Transverse colon (tissue), 4 donors: ENCODE measurements at regions of chr1 and their contacts with region 1.

Region 1: DNA sequence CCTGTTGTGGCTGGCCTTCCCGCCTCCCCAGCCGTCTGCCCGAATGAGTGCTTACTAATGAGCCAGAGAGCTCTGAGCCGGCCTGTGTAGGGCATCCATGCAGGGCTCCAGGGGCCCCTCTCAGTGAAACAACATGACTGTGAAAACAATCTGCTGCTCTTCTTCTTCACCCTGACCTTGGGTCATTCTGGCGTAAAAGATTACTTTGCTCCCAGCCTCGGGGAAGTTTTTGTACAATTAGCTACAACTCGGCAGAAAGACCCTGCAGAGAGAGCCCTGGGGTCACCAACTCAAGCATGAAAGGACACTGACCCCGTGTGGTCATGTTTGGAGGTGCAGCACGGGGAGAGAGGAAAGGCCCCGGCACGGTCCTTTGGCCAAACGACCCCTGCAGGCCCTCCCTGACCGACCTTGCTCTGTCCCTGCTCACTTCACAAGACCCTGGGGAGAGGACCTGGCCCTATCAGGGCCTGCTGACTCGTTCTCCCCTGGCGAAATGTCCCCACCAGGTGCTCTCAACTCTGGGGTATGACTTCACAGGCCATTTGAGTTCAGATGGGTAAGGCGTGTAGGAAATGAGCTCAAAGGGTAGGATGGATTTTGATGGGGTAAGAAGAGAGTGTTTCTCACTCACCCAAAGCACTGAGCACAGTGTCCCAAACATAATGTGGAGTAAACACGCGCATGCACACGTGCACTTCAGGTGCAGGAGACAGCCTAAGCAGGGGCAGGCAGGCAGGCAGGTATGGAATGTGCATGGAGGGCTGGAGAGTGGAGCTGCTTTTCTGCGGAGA is 22.9 kb upstream of the FAM20B start:
- DNase-seq: peak; percentile 79
- H3K4me3 ChIP-seq: no peak overlapping the region
- H3K27ac ChIP-seq: peak overlapping the region; percentile 52 to 66 (median 53)
- H3K4me1 ChIP-seq: peaks cover 0 to 20% (median 14%) of the 10 kb centered on the region in 4 donors
- H3K27me3 ChIP-seq: no peaks in the 10 kb centered on the region
- CTCF ChIP-seq: peak; percentile 97 to 99 (median 98)
- EP300 ChIP-seq: no peak
- POLR2A ChIP-seq: no peak

Region 2: GRCh38 chr1:177392336-177392735 is 1610.4 kb before region 1 on chr1:
- in situ Hi-C with region 1: no loop called
- intact Hi-C with region 1: no loop called
- DNase-seq: no peak
- H3K4me3 ChIP-seq: no peak overlapping the region
- H3K27ac ChIP-seq: no peak overlapping the region
- H3K4me1 ChIP-seq: no peaks in the 10 kb centered on the region
- H3K27me3 ChIP-seq: no peaks in the 10 kb centered on the region
- CTCF ChIP-seq: no peak
- EP300 ChIP-seq: no peak
- POLR2A ChIP-seq: no peak

Region 3: DNA sequence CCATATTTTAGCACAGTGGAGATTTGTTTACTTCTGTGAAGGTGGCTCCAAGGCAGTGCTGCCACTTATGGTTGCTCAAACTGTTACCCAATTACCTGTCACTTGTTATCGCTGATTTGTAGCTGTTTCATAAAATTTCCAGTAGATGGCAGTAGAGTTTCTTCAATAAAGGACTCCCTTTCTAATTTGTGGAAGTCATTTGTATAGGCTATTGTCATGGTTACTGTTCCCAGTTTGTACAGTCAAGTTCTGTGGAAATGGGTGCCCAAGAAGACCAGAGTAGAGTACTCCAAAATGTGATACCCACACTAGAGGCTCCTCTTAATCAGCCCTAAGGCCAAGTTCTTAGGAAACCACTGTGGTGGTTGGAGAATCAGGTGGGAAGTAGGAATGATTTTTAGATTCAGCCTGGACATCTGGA is 692.1 kb before region 1 on chr1:
- in situ Hi-C with region 1: loop called in 1 of 4 experiments (anchors 25 kb)
- intact Hi-C with region 1: no loop called
- DNase-seq: no peak
- H3K4me3 ChIP-seq: no peak overlapping the region
- H3K27ac ChIP-seq: no peak overlapping the region
- H3K4me1 ChIP-seq: peaks cover 0 to 12% (median 8%) of the 10 kb centered on the region in 4 donors
- H3K27me3 ChIP-seq: no peaks in the 10 kb centered on the region
- CTCF ChIP-seq: peak; percentile 66 to 81 (median 74)
- EP300 ChIP-seq: no peak
- POLR2A ChIP-seq: no peak

Region 4: GRCh38 chr1:178532392-178532791 is 470.4 kb before region 1 on chr1:
- in situ Hi-C with region 1: loop called (anchors 5 to 25 kb)
- intact Hi-C with region 1: loop called (anchors 10 kb)
- DNase-seq: peak; percentile 90
- H3K4me3 ChIP-seq: no peak overlapping the region
- H3K27ac ChIP-seq: no peak overlapping the region
- H3K4me1 ChIP-seq: peaks cover 1 to 21% (median 6%) of the 10 kb centered on the region in 4 donors
- H3K27me3 ChIP-seq: no peaks in the 10 kb centered on the region
- CTCF ChIP-seq: peak; percentile 90 to 93 (median 92)
- EP300 ChIP-seq: no peak
- POLR2A ChIP-seq: no peak

Region 5: DNA sequence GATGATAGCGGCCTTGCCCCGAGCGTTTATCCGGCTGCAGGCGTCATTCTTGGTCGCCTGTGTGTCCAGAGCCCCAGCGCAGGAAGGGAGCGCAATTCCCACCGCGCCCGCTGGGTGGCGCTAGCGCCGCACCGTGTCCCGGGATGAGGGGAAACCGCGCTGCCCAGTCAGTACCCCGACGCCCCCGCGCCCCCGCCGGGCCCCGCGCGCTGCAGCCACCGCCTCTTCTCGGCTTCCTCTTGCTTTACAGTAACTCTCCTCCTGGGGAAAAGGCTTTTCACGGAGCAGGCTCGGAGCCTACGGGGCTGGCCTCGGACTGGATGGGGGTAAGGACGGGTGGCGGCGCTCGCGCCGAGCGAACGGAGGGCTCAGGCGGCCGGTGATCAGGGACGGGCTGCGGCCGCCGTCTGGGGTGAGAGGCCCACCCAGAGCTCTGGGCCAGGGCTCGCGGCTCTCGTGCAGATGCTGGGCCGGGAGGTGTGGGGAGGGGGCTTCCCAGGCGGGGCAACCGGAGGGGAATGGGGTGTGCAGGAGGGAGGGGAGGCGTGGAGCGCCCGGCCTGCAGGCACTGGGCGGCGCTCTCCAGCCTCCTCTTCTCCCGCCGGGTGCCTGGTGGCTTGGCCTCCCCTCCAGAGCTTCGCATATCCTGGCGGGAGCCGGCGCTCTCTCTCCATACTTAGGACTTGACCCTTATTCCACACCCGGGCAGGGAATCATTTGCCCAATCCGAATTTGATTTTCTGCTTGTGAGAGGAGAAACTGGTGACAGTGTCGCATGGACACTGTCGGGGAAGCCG is 460.0 kb before region 1 on chr1:
- in situ Hi-C with region 1: loop called in 1 of 4 experiments (anchors 25 kb)
- intact Hi-C with region 1: loop called (anchors 10 kb)
- DNase-seq: peak; percentile 94
- H3K4me3 ChIP-seq: peak overlapping the region; percentile 62 to 98 (median 71)
- H3K27ac ChIP-seq: peak overlapping the region; percentile 89 to 96 (median 92)
- H3K4me1 ChIP-seq: peaks cover 15 to 34% (median 21%) of the 10 kb centered on the region in 4 donors
- H3K27me3 ChIP-seq: no peaks in the 10 kb centered on the region
- CTCF ChIP-seq: peak; percentile 99 to 100 (median 100)
- EP300 ChIP-seq: no peak
- POLR2A ChIP-seq: peak; percentile 11

Region 6: GRCh38 chr1:178768423-178768822 is 234.3 kb before region 1 on chr1:
- in situ Hi-C with region 1: loop called in 3 of 4 experiments (anchors 10 to 25 kb)
- intact Hi-C with region 1: loop called (anchors 5 kb)
- DNase-seq: no peak
- H3K4me3 ChIP-seq: no peak overlapping the region
- H3K27ac ChIP-seq: no peak overlapping the region
- H3K4me1 ChIP-seq: no peaks in the 10 kb centered on the region
- H3K27me3 ChIP-seq: no peaks in the 10 kb centered on the region
- CTCF ChIP-seq: peak; percentile 43 to 67 (median 55)
- EP300 ChIP-seq: no peak
- POLR2A ChIP-seq: no peak

Region 7: GRCh38 chr1:178808529-178808928 is 194.2 kb before region 1 on chr1:
- in situ Hi-C with region 1: no loop called
- intact Hi-C with region 1: loop called (anchors 1 kb)
- DNase-seq: no peak
- H3K4me3 ChIP-seq: no peak overlapping the region
- H3K27ac ChIP-seq: no peak overlapping the region
- H3K4me1 ChIP-seq: no peaks in the 10 kb centered on the region
- H3K27me3 ChIP-seq: no peaks in the 10 kb centered on the region
- CTCF ChIP-seq: no peak
- EP300 ChIP-seq: no peak
- POLR2A ChIP-seq: no peak

Region 8: GRCh38 chr1:178870944-178871343 is 131.8 kb before region 1 on chr1 and contains the start of gene ANGPTL1:
- in situ Hi-C with region 1: loop called in 1 of 4 experiments (anchors 10 kb)
- intact Hi-C with region 1: no loop called
- DNase-seq: no peak
- H3K4me3 ChIP-seq: peak within 1 kb of the TSS; percentile 7 to 45 (median 22)
- H3K27ac ChIP-seq: peak within 1 kb of the TSS; percentile 73 to 84 (median 80)
- H3K4me1 ChIP-seq: peaks cover 10 to 42% (median 29%) of the 10 kb centered on the region in 4 donors
- H3K27me3 ChIP-seq: no peaks in the 10 kb centered on the region
- CTCF ChIP-seq: no peak
- EP300 ChIP-seq: no peak
- POLR2A ChIP-seq: peak; percentile 29
- total RNA-seq, gene ANGPTL1: 10.8 to 29.2 (median 18.0) TPM

Region 9: DNA sequence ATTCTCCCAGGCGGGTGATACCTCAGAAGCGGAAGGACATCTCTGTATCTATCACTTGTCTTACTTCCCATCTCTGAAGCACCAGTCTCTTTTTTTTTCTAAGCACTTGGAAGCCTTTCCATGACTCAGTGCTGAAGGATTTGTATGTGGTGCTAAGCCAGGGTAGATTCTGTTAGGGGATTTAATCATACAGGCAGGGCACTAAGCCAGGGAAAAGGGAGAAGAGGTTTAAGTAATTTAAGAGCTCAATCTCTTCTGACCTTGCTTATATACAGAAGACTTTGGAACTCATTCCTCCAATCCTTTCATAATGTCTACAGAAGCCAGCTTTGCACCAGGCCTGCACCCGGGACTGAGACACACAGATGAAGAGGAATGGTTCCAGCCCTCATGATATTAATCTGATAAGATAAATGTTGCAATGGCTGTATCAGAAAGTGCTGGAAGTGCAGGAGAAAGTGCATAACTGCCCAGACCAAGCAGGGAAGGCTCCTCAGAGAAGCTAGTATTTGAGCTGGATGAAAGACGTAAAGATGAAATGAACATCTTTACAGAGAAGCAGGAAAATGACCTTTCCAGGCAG is 751.4 kb after region 1 on chr1:
- in situ Hi-C with region 1: no loop called
- intact Hi-C with region 1: no loop called
- DNase-seq: no peak
- H3K4me3 ChIP-seq: no peak overlapping the region
- H3K27ac ChIP-seq: peak overlapping the region in 3 of 4 donors; percentile 39 to 58 (median 55)
- H3K4me1 ChIP-seq: no peaks in the 10 kb centered on the region
- H3K27me3 ChIP-seq: no peaks in the 10 kb centered on the region
- CTCF ChIP-seq: no peak
- EP300 ChIP-seq: no peak
- POLR2A ChIP-seq: no peak